Sciatic nerve (tissue), 2 donors: ENCODE measurements at regions of chr16 and their contacts with region 1.

Region 1: GRCh38 chr16:14285513-14286385 is 214.6 kb downstream of the MRTFB start:
- DNase-seq: peak; percentile 97
- ATAC-seq: peak; percentile 95

Region 2: GRCh38 chr16:14057878-14058382 is 227.8 kb before region 1 on chr16:
- intact Hi-C with region 1: no loop called
- DNase-seq: no peak
- ATAC-seq: peak; percentile 60

Region 3: GRCh38 chr16:14539631-14540030 is 253.9 kb after region 1 on chr16:
- intact Hi-C with region 1: loop called (anchors 10 kb)
- DNase-seq: no peak
- ATAC-seq: no peak